Pancreas (tissue), 10 donors: ENCODE measurements at regions of chr2 and their contacts with region 1.

Region 1: GRCh38 chr2:42513257-42513918 is 19.6 kb upstream of the KCNG3 start:
- DNase-seq: peak in 3 of 6 donors; percentile 22 to 49 (median 43)
- ATAC-seq: peak; percentile 93 to 99 (median 96)
- H3K4me3 ChIP-seq: no peak overlapping the region
- H3K27ac ChIP-seq: no peak overlapping the region
- H3K4me1 ChIP-seq: no peaks in the 10 kb centered on the region
- H3K27me3 ChIP-seq: no peaks in the 10 kb centered on the region
- CTCF ChIP-seq: peak; percentile 33 to 56 (median 42)

Region 2: GRCh38 chr2:42663106-42663780 is 149.9 kb after region 1 on chr2:
- intact Hi-C with region 1: loop called in 2 of 3 experiments (anchors 10 kb)
- DNase-seq: peak; percentile 51 to 83 (median 67)
- ATAC-seq: peak; percentile 86 to 99 (median 96)
- H3K4me3 ChIP-seq: no peak overlapping the region
- H3K27ac ChIP-seq: no peak overlapping the region
- H3K4me1 ChIP-seq: peaks cover 0 to 12% (median 9%) of the 10 kb centered on the region in 3 donors
- H3K27me3 ChIP-seq: no peaks in the 10 kb centered on the region
- CTCF ChIP-seq: peak; percentile 80 to 95 (median 92)